GM12878 (cell line): ENCODE measurements at regions of chr5 and their contacts with region 1.

Region 1: GRCh38 chr5:141557681-141558136 is 61.1 kb downstream of the DIAPH1 start:
- DNase-seq: peak; percentile 43
- ATAC-seq: peak; percentile 96
- H3K4me3 ChIP-seq: no peak overlapping the region
- H3K27ac ChIP-seq: peak overlapping the region; percentile 22; the same call in 1 of the 2 replicates
- H3K4me1 ChIP-seq: no peaks in the 10 kb centered on the region
- H3K27me3 ChIP-seq: no peaks in the 10 kb centered on the region
- CTCF ChIP-seq: peak; percentile 72 to 82 (median 78)
- EP300 ChIP-seq: no peak
- POLR2A ChIP-seq: 0 out of 2 replicates have a peak, but pooled peaks have one; percentile 32
- RAD21 ChIP-seq: peak; percentile 96

Region 2: GRCh38 chr5:141420855-141421496 is 136.7 kb before region 1 on chr5 and contains the start of gene PCDHGA11:
- CTCF ChIA-PET with region 1: interaction called, 245 read pairs
- POLR2A ChIA-PET with region 1: interaction called, 8 read pairs
- RAD21 ChIA-PET with region 1: interaction called, 34 read pairs
- SMC1A ChIA-PET with region 1: interaction called, 67 read pairs
- in situ Hi-C with region 1: loop called (anchors 5 kb)
- intact Hi-C with region 1: loop called (anchors 1 kb)
- DNase-seq: peak; percentile 37
- ATAC-seq: peak; percentile 77
- H3K4me3 ChIP-seq: peak within 1 kb of the TSS; percentile 76
- H3K27ac ChIP-seq: no peak within 1 kb of the TSS
- H3K4me1 ChIP-seq: peaks cover 4% of the 10 kb centered on the region; the same call in 1 of the 2 replicates
- H3K27me3 ChIP-seq: no peaks in the 10 kb centered on the region; a peak in 1 of 4 replicates
- CTCF ChIP-seq: peak; percentile 83 to 89 (median 89)
- EP300 ChIP-seq: no peak
- POLR2A ChIP-seq: no peak
- RAD21 ChIP-seq: peak; percentile 82
- polyA plus RNA-seq, gene PCDHGA11: 0.21 to 0.31 TPM

Region 3: DNA sequence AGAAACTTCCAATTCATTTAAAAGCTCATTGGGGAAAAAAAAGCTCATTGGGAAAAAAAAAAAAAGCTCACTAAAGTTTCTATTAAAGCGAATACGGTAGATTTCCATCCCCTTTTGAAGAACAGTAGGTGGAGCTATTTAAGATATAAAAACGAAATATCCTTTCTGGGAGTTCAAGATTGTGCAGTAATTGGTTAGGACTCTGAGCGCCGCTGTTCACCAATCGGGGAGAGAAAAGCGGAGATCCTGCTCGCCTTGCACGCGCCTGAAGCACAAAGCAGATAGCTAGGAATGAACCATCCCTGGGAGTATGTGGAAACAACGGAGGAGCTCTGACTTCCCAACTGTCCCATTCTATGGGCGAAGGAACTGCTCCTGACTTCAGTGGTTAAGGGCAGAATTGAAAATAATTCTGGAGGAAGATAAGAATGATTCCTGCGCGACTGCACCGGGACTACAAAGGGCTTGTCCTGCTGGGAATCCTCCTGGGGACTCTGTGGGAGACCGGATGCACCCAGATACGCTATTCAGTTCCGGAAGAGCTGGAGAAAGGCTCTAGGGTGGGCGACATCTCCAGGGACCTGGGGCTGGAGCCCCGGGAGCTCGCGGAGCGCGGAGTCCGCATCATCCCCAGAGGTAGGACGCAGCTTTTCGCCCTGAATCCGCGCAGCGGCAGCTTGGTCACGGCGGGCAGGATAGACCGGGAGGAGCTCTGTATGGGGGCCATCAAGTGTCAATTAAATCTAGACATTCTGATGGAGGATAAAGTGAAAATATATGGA is 127.2 kb before region 1 on chr5 and contains the start of gene PCDHGA12:
- CTCF ChIA-PET with region 1: interaction called, 46 read pairs
- POLR2A ChIA-PET with region 1: no interaction called
- RAD21 ChIA-PET with region 1: interaction called, 21 read pairs
- SMC1A ChIA-PET with region 1: interaction called, 20 read pairs
- in situ Hi-C with region 1: no loop called
- intact Hi-C with region 1: no loop called
- DNase-seq: peak; percentile 37
- ATAC-seq: peak; percentile 96
- H3K4me3 ChIP-seq: peak within 1 kb of the TSS; percentile 22; the same call in 1 of the 2 replicates
- H3K27ac ChIP-seq: no peak within 1 kb of the TSS
- H3K4me1 ChIP-seq: no peaks in the 10 kb centered on the region; the same call in 1 of the 2 replicates
- H3K27me3 ChIP-seq: no peaks in the 10 kb centered on the region
- CTCF ChIP-seq: peak; percentile 62 to 82 (median 68)
- EP300 ChIP-seq: no peak
- POLR2A ChIP-seq: no peak
- RAD21 ChIP-seq: peak; percentile 56
- polyA plus RNA-seq, gene PCDHGA12: not detected

Region 4: DNA sequence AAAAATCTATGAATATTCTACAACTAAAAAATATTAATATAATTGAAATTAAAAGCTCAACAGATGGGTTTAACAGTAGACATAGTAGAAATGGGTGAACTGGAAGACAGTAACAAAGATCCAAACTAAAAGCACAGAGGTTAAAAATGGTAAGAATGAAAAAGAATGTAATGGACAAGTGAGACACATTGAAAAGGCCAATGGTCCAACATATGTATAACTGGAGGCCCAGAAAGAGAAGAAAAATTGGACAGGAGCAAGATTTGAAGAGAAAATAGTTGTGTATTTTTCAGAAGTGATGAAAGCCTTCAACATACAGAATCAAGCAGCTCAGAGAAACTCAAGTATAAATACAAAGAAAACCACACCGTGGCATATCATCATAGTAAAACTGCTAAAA is 10.2 kb before region 1 on chr5:
- CTCF ChIA-PET with region 1: interaction called, 11 read pairs
- POLR2A ChIA-PET with region 1: no interaction called
- RAD21 ChIA-PET with region 1: interaction called, 3 read pairs
- SMC1A ChIA-PET with region 1: interaction called, 7 read pairs
- in situ Hi-C with region 1: no loop called
- intact Hi-C with region 1: no loop called
- DNase-seq: no peak
- ATAC-seq: no peak
- H3K4me3 ChIP-seq: no peak overlapping the region
- H3K27ac ChIP-seq: no peak overlapping the region
- H3K4me1 ChIP-seq: no peaks in the 10 kb centered on the region
- H3K27me3 ChIP-seq: no peaks in the 10 kb centered on the region
- CTCF ChIP-seq: no peak
- EP300 ChIP-seq: no peak
- POLR2A ChIP-seq: no peak
- RAD21 ChIP-seq: no peak